Keratinocyte (primary cell): ENCODE measurements at regions of chr5 and their contacts with region 1.

Region 1: DNA sequence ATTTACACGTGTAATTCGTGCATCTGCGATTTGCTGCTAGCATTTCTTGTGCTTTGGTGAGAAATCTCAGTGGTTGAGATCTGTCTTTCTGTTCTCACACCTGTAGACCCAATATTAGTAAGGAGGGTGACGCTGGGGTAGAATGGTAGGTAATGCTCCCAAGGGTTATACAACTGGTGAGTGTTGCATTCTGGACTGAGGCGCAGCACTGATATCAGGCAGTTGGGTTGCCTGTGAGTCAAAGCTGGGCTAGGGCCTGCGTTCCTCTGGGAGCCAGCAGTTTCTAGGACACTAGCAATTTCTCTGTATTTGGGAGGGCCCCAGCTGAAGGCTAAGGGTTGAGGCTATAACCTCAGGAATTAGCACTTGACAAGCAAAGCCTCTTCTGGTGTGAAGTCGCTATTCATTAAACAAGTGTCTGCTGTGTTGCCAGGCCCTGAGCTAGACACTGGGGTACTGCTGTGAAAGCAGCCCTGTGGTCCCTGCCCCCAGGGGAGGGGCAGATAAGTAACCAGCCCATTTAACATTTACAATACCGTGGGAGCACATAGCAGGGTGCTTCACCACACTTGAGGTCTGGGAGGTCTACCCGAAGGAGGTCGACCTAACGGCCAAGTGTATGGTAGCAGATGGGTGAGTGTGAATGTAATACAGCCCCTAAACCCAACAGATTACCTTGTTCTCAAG is 28.7 kb downstream of the LARP1 start:
- DNase-seq: no peak
- H3K4me3 ChIP-seq: no peak overlapping the region
- H3K27ac ChIP-seq: no peak overlapping the region
- H3K4me1 ChIP-seq: peaks cover 5% of the 10 kb centered on the region
- H3K27me3 ChIP-seq: no peaks in the 10 kb centered on the region
- CTCF ChIP-seq: no peak

Region 2: GRCh38 chr5:154647114-154647760 is 136.7 kb before region 1 on chr5:
- dilution Hi-C with region 1: loop called (anchors 10 kb)
- DNase-seq: no peak
- H3K4me3 ChIP-seq: peak overlapping the region in 1 of 3 experiments; percentile 36
- H3K27ac ChIP-seq: no peak overlapping the region
- H3K4me1 ChIP-seq: peaks cover 8% of the 10 kb centered on the region
- H3K27me3 ChIP-seq: peaks cover 5% of the 10 kb centered on the region
- CTCF ChIP-seq: no peak

Region 3: DNA sequence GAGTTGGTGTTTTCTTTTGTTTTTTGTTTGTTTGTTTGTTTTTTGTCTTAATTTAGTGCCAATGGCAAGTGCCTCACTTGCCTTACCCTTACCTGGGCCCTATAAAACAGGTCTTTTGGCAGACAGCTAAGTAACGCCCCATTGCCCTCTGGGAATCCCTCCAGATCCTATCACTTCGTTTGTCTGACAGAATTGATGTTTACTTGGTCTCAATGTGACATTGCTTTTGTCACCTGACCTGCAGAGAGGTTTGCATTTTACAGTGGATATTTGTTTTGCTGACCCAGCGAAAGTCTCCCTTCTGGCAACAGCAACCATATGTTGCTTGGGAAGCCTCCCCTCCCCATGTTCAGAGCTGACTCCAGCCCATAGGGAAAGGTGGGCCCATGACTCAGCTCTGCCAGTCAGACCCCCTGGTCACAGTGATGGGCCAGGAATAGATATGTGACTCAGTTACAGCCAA is 82.8 kb before region 1 on chr5:
- dilution Hi-C with region 1: no loop called
- DNase-seq: no peak
- H3K4me3 ChIP-seq: no peak overlapping the region
- H3K27ac ChIP-seq: no peak overlapping the region
- H3K4me1 ChIP-seq: no peaks in the 10 kb centered on the region
- H3K27me3 ChIP-seq: no peaks in the 10 kb centered on the region
- CTCF ChIP-seq: no peak

Region 4: GRCh38 chr5:154934881-154935280 is 151.0 kb after region 1 on chr5:
- dilution Hi-C with region 1: no loop called
- DNase-seq: no peak
- H3K4me3 ChIP-seq: no peak overlapping the region
- H3K27ac ChIP-seq: no peak overlapping the region
- H3K4me1 ChIP-seq: peaks cover 13% of the 10 kb centered on the region
- H3K27me3 ChIP-seq: no peaks in the 10 kb centered on the region
- CTCF ChIP-seq: no peak